PC-9 (cell line): ENCODE measurements at regions of chr15 and their contacts with region 1.

Region 1: DNA sequence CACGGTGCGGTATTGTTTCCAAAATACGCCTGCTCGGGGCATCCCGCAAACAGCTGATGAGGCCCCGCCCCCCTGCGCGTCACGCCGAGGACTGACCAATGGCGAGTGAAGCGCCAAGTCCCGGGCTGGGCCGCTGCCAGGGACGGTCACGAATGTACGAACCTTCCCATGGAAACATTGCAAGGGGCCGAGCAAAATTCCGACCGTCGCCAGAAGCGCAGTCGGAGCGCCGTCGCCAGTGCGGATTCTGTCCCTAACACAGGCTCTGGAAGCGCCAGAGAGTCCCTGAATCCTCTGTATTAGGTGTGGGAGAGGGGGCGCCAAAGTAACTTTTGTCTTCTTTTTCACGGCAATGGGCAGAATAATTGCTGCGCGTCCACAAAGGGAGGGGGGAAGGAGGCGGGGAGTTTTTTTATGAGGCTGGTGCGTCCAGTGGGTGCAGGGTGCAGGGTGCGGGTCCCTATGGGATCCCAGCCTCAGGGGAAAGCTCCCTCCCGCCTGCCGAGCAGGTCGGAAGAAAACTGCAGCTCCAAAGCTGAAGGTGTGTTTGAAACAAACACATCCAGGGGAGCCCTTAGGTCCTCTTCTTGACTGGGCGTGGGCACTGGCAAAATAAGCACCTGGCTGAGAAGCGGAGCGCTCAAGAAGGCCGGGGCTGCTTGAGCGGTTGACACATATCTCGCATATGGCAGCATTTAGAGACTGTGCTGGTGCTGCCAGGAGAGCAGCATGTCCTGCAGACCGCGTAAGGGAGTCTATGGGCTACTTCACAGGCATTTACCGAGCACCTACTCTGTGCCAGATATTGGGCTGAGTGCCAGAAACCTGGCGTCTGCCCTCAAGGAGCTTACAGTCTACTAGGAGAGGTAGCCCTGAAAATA is at the start of gene BMF:
- DNase-seq: peak; percentile 89 to 97
- H3K4me3 ChIP-seq: peak within 1 kb of the TSS; percentile 66
- H3K27ac ChIP-seq: no peak within 1 kb of the TSS; the same call in 1 of the 2 replicates
- H3K4me1 ChIP-seq: peaks cover 41% of the 10 kb centered on the region
- H3K27me3 ChIP-seq: no peaks in the 10 kb centered on the region
- CTCF ChIP-seq: peak; percentile 58; the same call in 1 of the 2 replicates
- total RNA-seq, gene BMF: 8.2 and 11.0 TPM in 2 replicates

Region 2: GRCh38 chr15:38589502-38589901 is 1519.6 kb before region 1 on chr15:
- CTCF ChIA-PET with region 1: no interaction called
- POLR2A ChIA-PET with region 1: interaction called, 12 read pairs
- intact Hi-C with region 1: no loop called
- DNase-seq: peak; percentile 64 to 89
- H3K4me3 ChIP-seq: 0 out of 2 replicates have a peak overlapping the region, but pooled peaks have one; percentile 23
- H3K27ac ChIP-seq: peak overlapping the region; percentile 83
- H3K4me1 ChIP-seq: peaks cover 45% of the 10 kb centered on the region
- H3K27me3 ChIP-seq: no peaks in the 10 kb centered on the region
- CTCF ChIP-seq: no peak

Region 3: DNA sequence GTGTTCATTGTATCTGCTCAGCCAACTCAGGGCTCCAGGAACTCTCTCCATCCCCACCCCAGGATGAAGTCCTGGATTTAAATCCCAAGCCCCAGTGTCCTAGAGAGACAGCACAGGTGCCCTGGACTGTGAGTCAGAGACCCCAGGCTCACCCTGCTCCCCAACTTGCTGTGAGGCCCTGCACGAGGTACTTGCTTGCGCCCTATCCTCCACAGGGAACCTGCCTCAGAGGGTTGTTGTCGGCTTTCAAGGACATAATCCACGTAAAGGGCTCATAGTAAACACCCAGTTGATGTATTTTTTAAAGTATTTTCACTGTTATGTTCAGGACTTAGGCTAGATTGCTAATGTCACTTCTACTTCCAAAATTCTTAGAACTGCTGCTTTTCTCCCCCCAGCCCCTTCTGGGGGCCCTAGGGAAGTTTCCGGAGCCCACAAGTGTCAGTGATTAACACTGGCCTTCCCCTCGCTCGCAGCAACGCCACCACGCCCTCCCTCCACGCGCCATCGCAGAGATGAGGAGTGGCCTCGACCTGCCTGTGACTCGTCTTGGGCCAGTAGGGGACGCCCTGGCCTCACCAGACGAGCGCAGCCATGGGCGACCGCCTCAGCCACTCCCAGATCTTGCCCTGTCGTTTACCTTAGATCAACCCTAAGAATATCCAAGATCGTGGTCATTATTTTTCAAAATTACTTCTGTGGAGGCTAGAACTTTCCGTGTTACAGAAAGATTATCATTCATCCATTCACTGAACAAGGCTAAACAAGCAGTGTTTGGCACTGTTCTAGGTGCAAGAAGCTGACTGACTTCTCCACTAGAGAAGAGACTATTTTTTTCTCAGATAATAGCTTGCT is 64.2 kb before region 1 on chr15:
- CTCF ChIA-PET with region 1: interaction called, 67 read pairs
- POLR2A ChIA-PET with region 1: interaction called, 4 read pairs
- intact Hi-C with region 1: no loop called
- DNase-seq: peak; percentile 59 to 83
- H3K4me3 ChIP-seq: peak overlapping the region; percentile 51
- H3K27ac ChIP-seq: no peak overlapping the region
- H3K4me1 ChIP-seq: peaks cover 50% of the 10 kb centered on the region
- H3K27me3 ChIP-seq: no peaks in the 10 kb centered on the region
- CTCF ChIP-seq: peak; percentile 84

Region 4: GRCh38 chr15:40081691-40082194 is 27.4 kb before region 1 on chr15:
- CTCF ChIA-PET with region 1: interaction called, 3 read pairs
- POLR2A ChIA-PET with region 1: interaction called, 13 read pairs
- intact Hi-C with region 1: no loop called
- DNase-seq: peak in 1 of 2 experiments; percentile 41
- H3K4me3 ChIP-seq: peak overlapping the region; percentile 44; the same call in 1 of the 2 replicates
- H3K27ac ChIP-seq: no peak overlapping the region
- H3K4me1 ChIP-seq: peaks cover 34% of the 10 kb centered on the region
- H3K27me3 ChIP-seq: no peaks in the 10 kb centered on the region
- CTCF ChIP-seq: no peak

Region 5: DNA sequence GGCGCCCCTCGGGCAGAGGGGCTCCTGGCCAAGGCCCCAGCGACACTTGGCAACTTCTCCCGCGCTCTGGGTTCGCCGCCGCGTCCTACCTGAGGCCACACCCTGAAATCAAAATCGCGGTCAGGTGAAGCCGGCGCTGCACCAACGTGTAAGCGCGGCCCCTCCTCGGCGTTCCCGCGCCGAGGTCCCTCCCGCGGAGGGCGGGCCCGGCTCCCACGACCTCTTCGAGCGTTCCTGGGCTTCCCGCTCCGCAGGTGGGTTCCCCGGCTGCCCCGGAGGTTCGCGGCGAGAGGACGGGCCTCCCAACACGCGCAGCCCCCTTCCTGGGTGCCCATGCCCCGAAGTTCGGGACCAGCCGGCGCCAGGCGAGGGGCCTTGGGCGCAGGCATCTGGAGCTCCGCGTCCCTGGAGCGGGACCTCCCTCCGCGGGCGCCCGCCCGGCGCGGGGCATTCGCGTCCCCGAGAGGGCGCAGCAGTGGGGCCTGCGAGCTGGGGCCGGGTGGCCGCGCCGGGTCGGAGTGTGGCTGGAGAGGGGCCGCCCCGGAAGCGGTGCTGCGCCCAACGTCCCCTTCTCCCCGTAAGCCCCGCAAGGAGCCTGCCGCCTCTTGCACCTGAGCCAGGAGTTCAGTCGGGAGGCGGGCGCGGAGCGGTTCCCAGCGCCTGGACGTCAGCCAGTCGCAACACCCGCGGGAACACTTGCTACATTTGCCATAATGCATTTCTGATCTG is 143.5 kb after region 1 on chr15:
- CTCF ChIA-PET with region 1: no interaction called
- POLR2A ChIA-PET with region 1: no interaction called
- intact Hi-C with region 1: loop called (anchors 10 kb)
- DNase-seq: peak in 1 of 2 experiments; percentile 48
- H3K4me3 ChIP-seq: peak overlapping the region; percentile 68
- H3K27ac ChIP-seq: no peak overlapping the region
- H3K4me1 ChIP-seq: peaks cover 26% of the 10 kb centered on the region
- H3K27me3 ChIP-seq: no peaks in the 10 kb centered on the region
- CTCF ChIP-seq: no peak

Region 6: GRCh38 chr15:40873625-40874561 is 764.8 kb after region 1 on chr15 and contains the start of gene RHOV:
- CTCF ChIA-PET with region 1: no interaction called
- POLR2A ChIA-PET with region 1: no interaction called
- intact Hi-C with region 1: loop called (anchors 10 kb)
- DNase-seq: peak; percentile 70 to 78
- H3K4me3 ChIP-seq: peak within 1 kb of the TSS; percentile 81
- H3K27ac ChIP-seq: peak within 1 kb of the TSS; percentile 91
- H3K4me1 ChIP-seq: peaks cover 52% of the 10 kb centered on the region
- H3K27me3 ChIP-seq: no peaks in the 10 kb centered on the region
- CTCF ChIP-seq: peak; percentile 42; the same call in 1 of the 2 replicates
- total RNA-seq, gene RHOV: 1.4 and 4.1 TPM in 2 replicates